K562 (cell line): ENCODE measurements at regions of chr11 and their contacts with region 1.

Region 1: DNA sequence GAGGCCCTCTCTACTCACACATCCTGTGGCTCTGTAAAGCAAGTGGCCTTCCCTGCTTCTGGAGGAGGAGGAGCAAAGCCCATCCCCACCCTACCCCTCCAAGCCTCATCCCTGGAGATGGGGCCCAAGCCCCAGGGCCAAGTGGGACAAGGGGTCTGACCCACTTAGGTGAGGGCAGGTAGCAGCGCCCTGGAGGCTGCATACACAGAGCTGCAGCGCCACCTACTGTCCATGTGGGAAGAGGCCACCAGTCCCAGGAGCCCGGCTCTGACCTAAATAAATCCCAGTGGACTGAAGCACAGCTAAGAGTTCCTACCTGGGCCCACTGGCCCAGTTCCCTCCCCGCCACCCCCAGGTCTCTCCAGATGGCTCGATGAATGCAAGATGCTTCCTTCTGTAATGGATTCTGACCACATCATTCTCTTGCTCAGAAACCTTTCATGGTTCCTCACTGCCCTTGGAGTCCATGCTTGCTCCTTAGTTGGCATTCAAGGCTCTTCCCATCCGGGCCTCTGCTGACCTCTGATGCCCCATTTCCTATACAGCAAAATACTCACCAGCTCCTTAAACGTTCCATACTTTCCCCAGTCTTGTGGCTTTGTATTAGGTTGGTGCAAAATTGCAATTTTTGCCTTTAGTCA is 62.1 kb downstream of the THAP12 start:
- DNase-seq: peak; percentile 82 to 90 (median 87)
- ATAC-seq: peak; percentile 97
- H3K4me3 ChIP-seq: no peak overlapping the region
- H3K27ac ChIP-seq: no peak overlapping the region
- H3K4me1 ChIP-seq: peaks cover 6 to 10% of the 10 kb centered on the region in 2 experiments; a peak in 3 of 5 replicates
- H3K27me3 ChIP-seq: peaks cover 9 to 29% of the 10 kb centered on the region in 2 experiments; a peak in 4 of 5 replicates
- CTCF ChIP-seq: peak; percentile 90 to 95 (median 95)
- EP300 ChIP-seq: no peak
- POLR2A ChIP-seq: no peak
- RAD21 ChIP-seq: peak; percentile 91 to 96

Region 2: GRCh38 chr11:75802913-75803820 is 515.7 kb before region 1 on chr11:
- CTCF ChIA-PET with region 1: no interaction called
- POLR2A ChIA-PET with region 1: no interaction called
- in situ Hi-C with region 1: no loop called
- intact Hi-C with region 1: loop called (anchors 5 kb)
- DNase-seq: peak; percentile 77 to 82 (median 80)
- ATAC-seq: peak; percentile 96
- H3K4me3 ChIP-seq: no peak overlapping the region
- H3K27ac ChIP-seq: no peak overlapping the region
- H3K4me1 ChIP-seq: 0 out of 5 replicates have a peak, but pooled peaks cover 0 to 3% of the 10 kb centered on the region in 2 experiments
- H3K27me3 ChIP-seq: no peaks in the 10 kb centered on the region
- CTCF ChIP-seq: peak; percentile 88 to 93 (median 88)
- EP300 ChIP-seq: no peak
- POLR2A ChIP-seq: no peak
- RAD21 ChIP-seq: peak; percentile 84 to 91

Region 3: GRCh38 chr11:75896843-75897419 is 421.9 kb before region 1 on chr11:
- CTCF ChIA-PET with region 1: interaction called, 14 read pairs
- POLR2A ChIA-PET with region 1: no interaction called
- in situ Hi-C with region 1: loop called (anchors 5 kb)
- intact Hi-C with region 1: loop called (anchors 2 kb)
- DNase-seq: peak; percentile 22 to 42 (median 29)
- ATAC-seq: peak; percentile 68; the same call in 2 of the 3 replicates
- H3K4me3 ChIP-seq: no peak overlapping the region
- H3K27ac ChIP-seq: no peak overlapping the region
- H3K4me1 ChIP-seq: no peaks in the 10 kb centered on the region
- H3K27me3 ChIP-seq: no peaks in the 10 kb centered on the region
- CTCF ChIP-seq: peak; percentile 45 to 85 (median 48); a peak in 4 of 6 replicates
- EP300 ChIP-seq: no peak
- POLR2A ChIP-seq: no peak
- RAD21 ChIP-seq: peak; percentile 86 to 87

Region 4: GRCh38 chr11:76194872-76195668 is 123.8 kb before region 1 on chr11:
- CTCF ChIA-PET with region 1: no interaction called
- POLR2A ChIA-PET with region 1: no interaction called
- in situ Hi-C with region 1: loop called (anchors 5 kb)
- intact Hi-C with region 1: no loop called
- DNase-seq: no peak
- ATAC-seq: no peak
- H3K4me3 ChIP-seq: no peak overlapping the region
- H3K27ac ChIP-seq: no peak overlapping the region
- H3K4me1 ChIP-seq: peaks cover 0 to 20% of the 10 kb centered on the region in 2 experiments; a peak in 2 of 5 replicates
- H3K27me3 ChIP-seq: peaks cover 3 to 48% of the 10 kb centered on the region in 2 experiments; a peak in 3 of 5 replicates
- CTCF ChIP-seq: no peak
- EP300 ChIP-seq: no peak
- POLR2A ChIP-seq: no peak
- RAD21 ChIP-seq: no peak

Region 5: DNA sequence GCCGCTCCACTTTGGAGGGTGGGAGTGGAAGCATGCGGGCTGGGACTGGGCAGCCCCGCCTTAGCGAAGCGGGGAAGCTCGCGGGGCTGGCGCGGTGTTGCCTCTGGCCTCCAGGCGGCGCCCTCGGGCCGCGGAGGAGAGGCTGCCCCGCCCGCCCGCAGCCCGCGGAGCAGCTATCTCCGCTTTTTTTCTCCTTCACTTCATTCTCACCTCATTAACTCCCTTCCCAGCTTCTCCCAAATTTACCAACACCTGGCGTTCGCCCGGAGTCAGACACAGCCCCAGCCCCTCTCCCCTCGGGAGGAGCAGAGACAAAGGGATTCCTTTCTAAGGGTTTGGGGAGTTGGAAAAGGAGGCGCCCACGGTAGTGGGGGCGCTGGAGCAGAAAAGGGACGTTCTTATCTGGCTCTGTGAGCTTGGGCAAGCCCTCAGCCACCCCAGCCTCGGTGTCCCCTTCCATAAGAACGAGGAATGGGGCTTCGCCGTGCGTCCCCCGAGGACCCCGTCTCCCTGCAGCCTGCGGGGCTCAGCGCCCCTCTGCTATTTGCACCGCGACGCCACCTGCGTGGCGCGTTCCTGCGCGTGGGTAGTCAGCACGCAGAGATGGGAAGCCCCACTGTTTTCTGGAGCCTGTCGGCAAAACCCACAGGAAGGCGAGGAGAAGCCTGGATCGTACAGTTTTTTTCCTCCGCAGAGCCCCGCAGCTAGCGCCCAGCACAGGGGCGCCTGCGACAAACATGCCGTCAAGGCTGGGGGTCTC is 111.0 kb before region 1 on chr11:
- CTCF ChIA-PET with region 1: interaction called, 29 read pairs
- POLR2A ChIA-PET with region 1: interaction called, 3 read pairs
- in situ Hi-C with region 1: no loop called
- intact Hi-C with region 1: loop called (anchors 1 kb)
- DNase-seq: peak; percentile 87 to 92 (median 90)
- ATAC-seq: peak; percentile 90
- H3K4me3 ChIP-seq: peak overlapping the region; percentile 46
- H3K27ac ChIP-seq: no peak overlapping the region
- H3K4me1 ChIP-seq: peaks cover 18 to 59% of the 10 kb centered on the region in 2 experiments; a peak in 4 of 5 replicates
- H3K27me3 ChIP-seq: peaks cover 0 to 29% of the 10 kb centered on the region in 2 experiments; a peak in 2 of 5 replicates
- CTCF ChIP-seq: peak; percentile 92 to 94 (median 93)
- EP300 ChIP-seq: no peak
- POLR2A ChIP-seq: no peak
- RAD21 ChIP-seq: peak; percentile 93 to 95